Common myeloid progenitor, CD34-positive (primary cell): ENCODE measurements at regions of chr14 and their contacts with region 1.

Region 1: GRCh38 chr14:77593501-77593961 is 22.9 kb downstream of the SPTLC2 start:
- DNase-seq: peak; percentile 81 to 95 (median 89)
- H3K4me3 ChIP-seq: peak overlapping the region in 3 of 7 experiments; percentile 15 to 65 (median 40)
- H3K27ac ChIP-seq: peak overlapping the region; percentile 86 to 94
- H3K4me1 ChIP-seq: peaks cover 34 to 79% (median 68%) of the 10 kb centered on the region in 4 experiments
- H3K27me3 ChIP-seq: no peaks in the 10 kb centered on the region

Region 2: GRCh38 chr14:77508249-77508648 is 85.3 kb before region 1 on chr14:
- CTCF ChIA-PET with region 1: no interaction called
- POLR2A ChIA-PET with region 1: no interaction called
- DNase-seq: no peak
- H3K4me3 ChIP-seq: no peak overlapping the region
- H3K27ac ChIP-seq: no peak overlapping the region
- H3K4me1 ChIP-seq: no peaks in the 10 kb centered on the region
- H3K27me3 ChIP-seq: no peaks in the 10 kb centered on the region

Region 3: GRCh38 chr14:77603654-77604255 is 10.2 kb after region 1 on chr14:
- CTCF ChIA-PET with region 1: interaction called, 27 read pairs
- POLR2A ChIA-PET with region 1: interaction called, 4 read pairs
- DNase-seq: peak; percentile 60 to 68 (median 65)
- H3K4me3 ChIP-seq: peak overlapping the region in 3 of 7 experiments; percentile 15 to 43 (median 30)
- H3K27ac ChIP-seq: peak overlapping the region; percentile 9 to 44
- H3K4me1 ChIP-seq: peaks cover 44 to 90% (median 77%) of the 10 kb centered on the region in 4 experiments
- H3K27me3 ChIP-seq: no peaks in the 10 kb centered on the region